Activated naive CD8-positive, alpha-beta T cell treated with anti-CD3 and anti-CD28 coated beads, Interleukin-2, amount 10 ng/mL, durations not matched to agents 7 days and 5 days (primary cell): ENCODE measurements at regions of chr12 and their contacts with region 1.

Region 1: DNA sequence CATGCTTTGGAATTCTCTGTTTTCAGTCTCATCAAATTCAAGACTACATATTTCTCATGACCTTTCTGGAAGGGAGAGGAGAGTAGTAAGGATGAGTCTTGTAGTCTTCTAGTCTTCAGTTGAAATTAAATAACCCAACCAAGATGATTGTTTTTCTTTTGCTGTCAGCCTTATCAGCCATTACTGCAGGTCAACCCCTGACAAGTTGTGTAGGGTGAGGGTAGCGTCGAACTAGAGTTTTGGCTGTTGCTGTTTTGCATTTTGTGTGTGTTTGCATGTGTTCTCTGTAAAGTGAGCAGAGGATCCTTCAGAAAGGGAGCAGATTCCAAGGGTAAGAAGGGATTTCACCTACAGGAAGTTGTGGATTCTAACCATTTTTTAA is 28.4 kb downstream of the DIP2B start:
- DNase-seq: no peak
- ATAC-seq: no peak
- H3K4me3 Mint-ChIP-seq: no peak overlapping the region
- H3K27ac Mint-ChIP-seq: no peak overlapping the region
- H3K4me1 Mint-ChIP-seq: peaks cover 26% of the 10 kb centered on the region
- H3K27me3 Mint-ChIP-seq: no peaks in the 10 kb centered on the region

Region 2: DNA sequence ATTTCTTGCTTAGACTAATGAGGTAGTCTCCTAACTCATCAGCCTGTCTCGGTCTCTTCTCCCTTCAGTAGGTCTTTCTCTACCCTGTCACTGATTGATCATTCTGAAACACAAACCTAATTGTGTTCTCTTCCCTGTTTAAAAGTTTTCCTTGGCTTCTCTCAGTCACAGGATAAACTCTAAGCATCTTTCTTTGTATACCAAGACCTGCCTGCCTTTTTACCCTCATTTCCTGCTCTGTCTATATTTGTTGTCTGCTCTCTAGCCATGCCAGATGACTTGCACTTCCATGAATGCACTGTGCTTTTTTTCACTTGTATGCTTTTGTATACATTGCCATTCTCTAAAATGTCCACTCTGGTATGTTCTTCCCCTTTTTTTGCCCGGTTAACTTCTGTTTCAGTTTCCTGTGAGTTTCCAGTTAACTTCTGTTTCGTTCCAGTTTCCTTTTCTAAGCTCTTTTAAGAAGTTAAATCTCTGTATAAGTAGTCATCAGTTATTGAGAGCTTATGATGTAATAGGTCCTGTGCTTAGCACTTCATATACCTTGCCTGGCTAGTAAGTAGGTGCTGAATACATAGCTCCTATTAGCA is 15.6 kb before region 1 on chr12:
- POLR2A ChIA-PET with region 1: interaction called, 14 read pairs
- DNase-seq: no peak
- ATAC-seq: peak; percentile 76
- H3K4me3 Mint-ChIP-seq: no peak overlapping the region
- H3K27ac Mint-ChIP-seq: no peak overlapping the region
- H3K4me1 Mint-ChIP-seq: peaks cover 38% of the 10 kb centered on the region
- H3K27me3 Mint-ChIP-seq: no peaks in the 10 kb centered on the region

Region 3: DNA sequence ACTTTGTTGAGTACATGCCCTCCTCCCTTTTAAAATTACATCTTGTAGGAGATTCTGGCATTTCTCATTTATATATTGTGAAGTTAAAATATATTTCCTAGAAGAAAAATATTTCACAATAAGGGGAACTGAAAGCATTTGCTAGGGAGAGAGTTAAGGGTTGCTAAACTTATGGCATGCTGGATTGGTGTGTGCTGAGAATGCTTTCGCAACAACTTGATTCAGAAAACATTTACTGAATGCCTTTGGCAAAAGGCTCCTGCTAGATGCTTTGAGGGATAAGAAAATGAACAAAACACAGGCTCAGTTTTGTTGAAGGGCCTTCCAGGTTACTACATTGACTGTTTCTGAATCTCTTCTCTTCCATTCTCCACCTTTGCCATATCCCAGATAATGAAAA is 39.1 kb after region 1 on chr12:
- POLR2A ChIA-PET with region 1: no interaction called
- DNase-seq: no peak
- ATAC-seq: no peak
- H3K4me3 Mint-ChIP-seq: no peak overlapping the region
- H3K27ac Mint-ChIP-seq: no peak overlapping the region
- H3K4me1 Mint-ChIP-seq: peaks cover 15% of the 10 kb centered on the region
- H3K27me3 Mint-ChIP-seq: no peaks in the 10 kb centered on the region

Region 4: DNA sequence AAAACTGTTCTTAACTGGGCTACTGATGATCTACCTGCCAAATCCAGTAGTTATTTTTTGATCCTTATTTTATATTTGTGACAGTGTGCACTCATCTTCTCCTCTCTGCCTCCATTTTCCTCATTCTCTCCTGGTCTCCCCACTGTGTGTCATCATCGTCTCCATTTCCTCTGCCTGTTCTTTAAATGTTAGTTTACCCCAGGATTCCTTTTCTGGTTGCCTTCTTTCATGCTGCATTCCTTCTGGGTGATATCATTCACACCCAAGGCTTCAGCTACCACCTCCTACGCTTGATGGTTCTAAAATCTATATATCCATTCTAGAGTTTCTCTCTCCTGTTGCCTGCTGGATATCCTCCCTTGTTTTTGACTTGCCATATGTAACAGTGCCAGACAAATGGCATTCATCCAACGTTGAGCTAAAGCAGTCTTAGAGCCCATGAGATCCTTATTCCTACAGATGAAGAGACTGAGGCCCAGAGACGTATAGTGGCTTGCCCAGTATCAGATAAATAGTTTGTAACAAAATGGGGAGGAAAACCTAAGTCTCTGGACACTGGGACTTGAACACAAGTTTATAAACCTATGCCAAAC is 81.1 kb after region 1 on chr12:
- POLR2A ChIA-PET with region 1: no interaction called
- DNase-seq: no peak
- ATAC-seq: no peak
- H3K4me3 Mint-ChIP-seq: no peak overlapping the region
- H3K27ac Mint-ChIP-seq: no peak overlapping the region
- H3K4me1 Mint-ChIP-seq: peaks cover 4% of the 10 kb centered on the region
- H3K27me3 Mint-ChIP-seq: no peaks in the 10 kb centered on the region